ENCODE measurements at regions of chr21 and their contacts with region 1.

Region 1: GRCh38 chr21:17387030-17387617 is 125.7 kb upstream of the CXADR start:
- DNase-seq: peak in 2 of 5 donors; percentile 24 to 25
- ATAC-seq: peak in 2 of 4 donors; percentile 52 to 55
- H3K4me3 ChIP-seq: no peak overlapping the region
- H3K27ac ChIP-seq: no peak overlapping the region
- H3K4me1 ChIP-seq: no peaks in the 10 kb centered on the region
- H3K27me3 ChIP-seq: no peaks in the 10 kb centered on the region
- CTCF ChIP-seq: peak; percentile 58 to 88 (median 80)
- POLR2A ChIP-seq: no peak

Region 2: DNA sequence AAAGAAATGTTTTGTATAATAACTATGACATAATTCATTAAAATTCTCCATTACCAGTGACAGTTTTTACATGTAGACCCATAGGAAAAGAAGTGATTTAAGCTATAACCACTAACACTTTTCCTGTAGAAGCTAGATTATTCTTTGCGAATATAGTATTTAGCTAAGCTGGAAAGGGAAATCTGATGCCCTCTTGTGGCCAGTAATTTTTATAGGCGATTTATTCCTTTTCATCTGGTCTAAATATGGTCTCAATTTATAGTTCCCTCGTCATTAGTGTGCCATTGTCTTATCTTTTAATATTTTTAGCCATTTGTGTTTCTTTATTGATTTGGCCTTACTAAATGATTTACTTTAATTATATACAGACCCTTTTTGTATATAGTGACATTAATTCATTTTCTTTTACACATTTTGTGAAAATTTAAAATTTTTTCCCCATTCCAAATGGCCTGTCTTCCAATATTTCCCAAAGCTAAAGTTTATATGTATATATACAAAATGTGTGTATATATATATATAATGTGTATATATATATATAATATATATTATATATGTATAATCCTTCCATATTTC is 198.8 kb after region 1 on chr21:
- intact Hi-C with region 1: loop called in 9 of 10 experiments (anchors 1 to 5 kb)
- DNase-seq: no peak
- ATAC-seq: peak in 1 of 4 donors; percentile 39
- H3K4me3 ChIP-seq: no peak overlapping the region
- H3K27ac ChIP-seq: no peak overlapping the region
- H3K4me1 ChIP-seq: no peaks in the 10 kb centered on the region
- H3K27me3 ChIP-seq: no peaks in the 10 kb centered on the region
- CTCF ChIP-seq: peak; percentile 44 to 77 (median 64)
- POLR2A ChIP-seq: no peak